ENCODE measurements at regions of chr13 and their contacts with region 1.

Region 1: DNA sequence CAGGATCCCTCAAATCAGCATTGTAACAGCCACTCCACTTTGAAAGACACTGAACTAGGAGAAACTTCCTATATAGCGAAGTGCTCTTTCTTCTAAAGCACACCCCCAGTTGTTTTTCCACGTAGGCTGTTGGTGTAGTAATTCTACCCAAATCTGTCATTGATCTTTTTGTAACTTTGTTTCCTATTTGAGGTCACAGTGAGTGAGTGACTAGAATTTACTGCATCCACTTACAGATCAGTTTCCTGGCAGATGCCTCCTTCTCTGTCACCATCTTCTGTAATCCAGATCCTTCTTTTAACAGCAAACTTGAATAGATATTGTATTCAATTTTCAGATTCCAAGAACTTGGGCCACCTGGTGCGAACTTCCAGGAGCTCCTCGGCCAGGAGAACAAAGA is 15.3 kb downstream of the ZAR1L start:
- DNase-seq: no peak
- H3K4me3 Mint-ChIP-seq: no peak overlapping the region
- H3K27ac Mint-ChIP-seq: no peak overlapping the region
- H3K4me1 Mint-ChIP-seq: peaks cover 17% of the 10 kb centered on the region
- H3K27me3 Mint-ChIP-seq: peaks cover 18% of the 10 kb centered on the region

Region 2: DNA sequence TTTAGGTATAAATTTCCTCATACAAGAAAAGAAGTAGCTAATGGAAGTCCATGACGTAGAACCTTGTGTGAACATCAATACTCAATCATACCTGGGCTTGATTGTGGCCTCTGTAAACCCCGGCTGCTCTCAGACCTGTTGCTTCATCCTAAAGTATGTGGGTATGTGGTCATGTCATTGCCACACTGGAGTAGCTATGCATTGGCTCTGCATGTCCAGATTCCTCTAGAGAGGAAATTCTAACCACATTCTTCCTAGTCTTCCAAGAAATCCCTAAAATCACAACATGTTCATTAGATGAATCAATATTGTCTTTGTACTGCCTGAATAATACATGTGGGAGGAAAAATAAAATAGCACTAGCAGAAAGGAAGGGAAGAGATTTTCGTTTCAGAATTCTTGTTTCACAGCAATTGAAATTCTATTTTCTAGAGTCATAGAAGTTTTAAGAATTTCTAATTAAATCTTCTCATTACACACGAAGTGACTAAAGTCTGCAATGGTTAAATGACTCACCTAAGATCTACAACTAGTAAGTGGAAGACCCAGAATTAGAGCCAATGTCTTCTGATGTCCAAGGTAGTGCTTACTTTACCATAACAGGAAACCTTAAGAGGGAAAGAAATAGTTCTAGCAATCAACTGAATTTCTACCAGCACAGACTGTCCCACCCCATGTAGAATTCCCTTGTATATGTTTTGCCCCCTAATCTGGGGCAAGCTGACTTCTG is 532.6 kb before region 1 on chr13:
- intact Hi-C with region 1: no loop called
- DNase-seq: no peak
- H3K4me3 Mint-ChIP-seq: no peak overlapping the region
- H3K27ac Mint-ChIP-seq: no peak overlapping the region
- H3K4me1 Mint-ChIP-seq: no peaks in the 10 kb centered on the region
- H3K27me3 Mint-ChIP-seq: peaks cover 7% of the 10 kb centered on the region

Region 3: DNA sequence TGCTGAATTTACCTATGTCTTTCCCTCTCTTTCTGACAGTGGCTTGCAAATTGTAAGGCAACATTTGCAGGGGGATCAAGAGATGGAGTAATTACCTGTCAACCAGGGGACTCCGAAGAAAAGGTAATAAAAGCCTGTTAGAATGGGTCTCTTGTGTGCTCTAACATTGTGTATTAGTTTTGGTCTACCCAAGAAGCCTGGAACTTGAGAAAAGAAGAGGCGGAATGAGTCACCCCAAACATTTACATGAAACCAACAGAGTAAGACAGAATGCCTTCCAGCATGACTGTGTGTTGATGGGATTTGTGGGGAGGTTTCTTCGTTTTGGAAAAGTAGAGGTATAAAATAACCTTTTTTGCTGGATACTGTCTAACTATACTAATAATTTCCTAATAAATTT is 21.5 kb before region 1 on chr13:
- intact Hi-C with region 1: loop called (anchors 1 kb)
- DNase-seq: no peak
- H3K4me3 Mint-ChIP-seq: no peak overlapping the region
- H3K27ac Mint-ChIP-seq: no peak overlapping the region
- H3K4me1 Mint-ChIP-seq: peaks cover 8% of the 10 kb centered on the region
- H3K27me3 Mint-ChIP-seq: peaks cover 2% of the 10 kb centered on the region